Activated CD4-positive, alpha-beta T cell treated with anti-CD3 and anti-CD28 coated beads for 36 hours (primary cell): ENCODE measurements at regions of chr11 and their contacts with region 1.

Region 1: DNA sequence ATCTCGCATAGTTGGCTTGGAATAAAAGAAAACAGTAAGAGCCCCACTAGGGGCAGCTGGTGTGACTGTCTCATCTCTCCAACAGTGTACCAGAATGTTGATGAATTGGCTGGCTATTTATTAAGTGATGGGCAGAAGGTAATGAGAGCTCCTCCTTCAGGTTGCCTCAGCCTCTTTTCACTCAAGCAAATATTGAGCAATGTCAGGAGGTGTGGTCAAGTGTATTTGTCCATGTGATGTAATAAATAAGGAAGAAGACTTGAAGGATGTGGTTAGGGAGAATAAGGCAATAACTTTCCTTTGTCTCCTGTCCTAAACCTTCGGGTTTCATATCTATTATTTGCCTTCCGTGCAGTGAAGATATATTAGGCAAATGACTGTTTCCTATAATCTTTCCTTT is at the start of gene TCN1:
- DNase-seq: no peak
- ATAC-seq: no peak
- H3K4me3 Mint-ChIP-seq: no peak within 1 kb of the TSS
- H3K27ac Mint-ChIP-seq: no peak within 1 kb of the TSS
- H3K4me1 Mint-ChIP-seq: peaks cover 2% of the 10 kb centered on the region
- H3K27me3 Mint-ChIP-seq: peaks cover 15% of the 10 kb centered on the region
- total RNA-seq, gene TCN1: not detected

Region 2: DNA sequence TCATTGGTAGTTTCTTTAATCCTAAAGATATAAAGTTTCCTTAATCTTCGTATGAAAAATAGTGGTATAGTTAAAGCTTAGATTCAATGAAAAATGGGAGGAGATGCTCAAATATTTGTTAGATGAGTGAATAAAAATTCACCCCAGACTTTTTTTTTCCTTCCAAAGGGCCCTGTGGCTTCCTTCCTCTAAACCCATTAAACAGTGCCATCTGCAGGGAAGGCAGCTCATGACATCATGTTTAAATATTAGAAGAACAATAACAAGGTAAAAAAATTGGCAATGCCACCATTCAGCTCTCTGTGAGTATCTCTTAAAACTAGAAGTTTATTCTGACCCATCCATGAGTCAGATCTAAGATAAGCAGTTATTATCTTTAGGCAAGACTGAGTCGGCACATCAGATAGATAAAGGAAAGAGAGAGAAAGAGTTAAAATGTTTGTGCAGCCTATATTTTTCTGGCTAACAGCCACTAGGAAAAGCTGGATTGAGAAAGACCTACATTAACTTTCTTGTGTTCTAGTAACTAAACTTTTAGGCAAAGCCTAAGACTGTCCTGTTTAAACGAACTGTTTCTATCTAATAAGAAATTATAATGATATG is 52.7 kb after region 1 on chr11:
- CTCF ChIA-PET with region 1: interaction called, 4 read pairs
- POLR2A ChIA-PET with region 1: no interaction called
- intact Hi-C with region 1: loop called in 1 of 2 experiments (anchors 5 kb)
- DNase-seq: peak; percentile 37
- ATAC-seq: peak; percentile 44
- H3K4me3 Mint-ChIP-seq: no peak overlapping the region
- H3K27ac Mint-ChIP-seq: no peak overlapping the region
- H3K4me1 Mint-ChIP-seq: no peaks in the 10 kb centered on the region
- H3K27me3 Mint-ChIP-seq: peaks cover 2% of the 10 kb centered on the region

Region 3: GRCh38 chr11:60332456-60333220 is 466.2 kb after region 1 on chr11:
- CTCF ChIA-PET with region 1: no interaction called
- POLR2A ChIA-PET with region 1: no interaction called
- intact Hi-C with region 1: no loop called
- DNase-seq: no peak
- ATAC-seq: no peak
- H3K4me3 Mint-ChIP-seq: no peak overlapping the region
- H3K27ac Mint-ChIP-seq: no peak overlapping the region
- H3K4me1 Mint-ChIP-seq: no peaks in the 10 kb centered on the region
- H3K27me3 Mint-ChIP-seq: peaks cover 12% of the 10 kb centered on the region